Activated CD4-positive, alpha-beta T cell treated with anti-CD3 and anti-CD28 coated beads for 36 hours (primary cell): ENCODE measurements at regions of chr15 and their contacts with region 1.

Region 1: DNA sequence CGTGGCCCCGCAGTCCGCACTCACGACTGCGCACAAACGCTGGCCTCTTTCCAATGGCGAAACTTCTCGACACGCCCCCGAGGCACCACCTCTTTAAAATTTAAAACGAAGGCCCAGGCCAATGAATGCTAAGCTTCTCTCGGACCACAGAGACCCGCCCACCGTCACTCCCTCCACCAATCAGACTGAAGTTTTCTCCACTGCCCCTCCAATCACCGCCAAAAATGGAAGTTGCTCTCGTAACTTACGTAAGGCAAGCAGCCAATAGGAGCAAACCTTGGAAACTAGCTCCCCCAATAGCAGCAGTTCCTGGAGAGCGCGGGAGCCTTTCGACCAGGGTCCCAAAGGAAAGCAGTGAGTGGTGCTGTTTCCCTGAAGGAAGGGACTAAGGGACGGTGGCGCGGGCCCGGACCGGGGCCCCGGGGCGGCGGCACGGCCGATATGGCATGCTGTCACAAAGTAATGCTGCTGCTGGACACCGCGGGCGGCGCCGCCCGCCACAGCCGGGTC is at the start of gene TICRR:
- DNase-seq: peak; percentile 96
- ATAC-seq: peak; percentile 99
- H3K4me3 Mint-ChIP-seq: peak within 1 kb of the TSS; percentile 89
- H3K27ac Mint-ChIP-seq: peak within 1 kb of the TSS; percentile 72
- H3K4me1 Mint-ChIP-seq: peaks cover 26% of the 10 kb centered on the region
- H3K27me3 Mint-ChIP-seq: peaks cover 5% of the 10 kb centered on the region
- total RNA-seq, gene TICRR: 25.7 to 28.9 TPM

Region 2: DNA sequence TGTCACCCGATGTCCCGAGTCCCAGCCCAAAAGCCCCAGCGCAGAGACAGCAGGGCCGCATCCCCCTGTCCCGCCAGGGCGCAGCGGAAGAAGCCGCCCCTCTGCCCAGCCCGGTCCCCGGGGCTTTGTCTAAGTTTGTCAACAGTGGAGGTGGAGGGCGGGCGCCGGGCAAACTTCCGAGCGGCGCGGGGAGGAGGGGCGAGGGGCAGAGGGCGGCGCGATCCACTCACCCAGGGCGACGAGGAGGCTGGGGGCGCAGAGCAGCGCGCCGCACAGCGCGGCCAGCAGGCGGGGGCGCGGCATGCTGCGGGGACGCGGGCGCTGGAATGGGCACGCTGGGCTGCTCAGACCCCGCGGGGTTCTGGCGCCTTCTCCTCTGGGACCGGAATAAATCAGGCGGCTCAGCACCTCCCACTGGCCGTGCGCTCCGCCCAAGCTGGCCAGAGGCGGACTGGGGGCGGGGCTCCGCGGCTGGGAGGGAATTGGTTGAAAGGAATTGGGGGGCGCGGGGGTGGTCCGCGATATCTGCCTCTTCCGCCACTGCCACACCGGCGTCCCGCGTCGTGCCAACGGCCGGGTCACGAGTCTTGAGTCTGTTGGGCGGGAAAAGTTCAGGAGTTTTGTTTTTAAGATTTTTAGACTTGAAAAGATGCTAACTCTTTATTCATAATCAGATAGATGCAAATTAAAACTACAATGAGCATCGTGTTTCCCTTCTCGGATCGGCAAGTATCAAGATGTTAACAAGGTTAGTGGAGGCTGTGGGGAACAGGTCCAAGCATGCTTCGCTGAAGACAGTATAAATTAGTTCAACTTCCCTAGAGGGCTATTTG is 662.0 kb before region 1 on chr15 and contains the start of gene MFGE8:
- CTCF ChIA-PET with region 1: no interaction called
- POLR2A ChIA-PET with region 1: no interaction called
- intact Hi-C with region 1: loop called in 1 of 2 experiments (anchors 10 kb)
- DNase-seq: peak; percentile 83
- ATAC-seq: peak; percentile 95
- H3K4me3 Mint-ChIP-seq: peak within 1 kb of the TSS; percentile 79
- H3K27ac Mint-ChIP-seq: peak within 1 kb of the TSS; percentile 82
- H3K4me1 Mint-ChIP-seq: peaks cover 16% of the 10 kb centered on the region
- H3K27me3 Mint-ChIP-seq: no peaks in the 10 kb centered on the region
- total RNA-seq, gene MFGE8: 17.0 to 18.6 TPM

Region 3: GRCh38 chr15:89334510-89335288 is 240.5 kb before region 1 on chr15 and contains the start of gene POLG:
- CTCF ChIA-PET with region 1: interaction called, 4 read pairs
- POLR2A ChIA-PET with region 1: no interaction called
- intact Hi-C with region 1: loop called in 1 of 2 experiments (anchors 1 kb)
- DNase-seq: peak; percentile 99
- ATAC-seq: peak; percentile 92
- H3K4me3 Mint-ChIP-seq: peak within 1 kb of the TSS; percentile 80
- H3K27ac Mint-ChIP-seq: peak within 1 kb of the TSS; percentile 87
- H3K4me1 Mint-ChIP-seq: peaks cover 56% of the 10 kb centered on the region
- H3K27me3 Mint-ChIP-seq: peaks cover 2% of the 10 kb centered on the region
- total RNA-seq, gene POLG: 63.2 to 80.4 TPM

Region 4: DNA sequence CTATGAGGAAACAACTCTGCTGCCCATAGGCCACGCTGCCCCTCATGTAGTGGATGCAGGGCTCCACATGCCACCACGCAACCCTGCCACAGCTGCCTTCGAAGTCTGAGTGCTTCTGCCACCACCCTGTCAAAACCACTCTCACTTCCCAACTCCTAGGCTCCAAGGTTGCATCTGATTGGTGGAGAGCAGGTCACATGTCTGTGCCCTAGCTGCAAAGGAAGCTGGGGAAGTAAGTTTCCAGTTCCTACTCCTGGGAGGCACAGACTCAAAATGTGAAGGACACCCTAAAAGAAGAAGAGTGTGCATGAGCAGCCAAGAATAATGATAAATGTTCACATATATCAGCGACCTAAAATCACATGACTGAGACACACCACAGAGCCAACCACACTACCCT is 31.8 kb before region 1 on chr15:
- CTCF ChIA-PET with region 1: no interaction called
- POLR2A ChIA-PET with region 1: no interaction called
- intact Hi-C with region 1: no loop called
- DNase-seq: no peak
- ATAC-seq: no peak
- H3K4me3 Mint-ChIP-seq: no peak overlapping the region
- H3K27ac Mint-ChIP-seq: no peak overlapping the region
- H3K4me1 Mint-ChIP-seq: no peaks in the 10 kb centered on the region
- H3K27me3 Mint-ChIP-seq: peaks cover 21% of the 10 kb centered on the region

Region 5: GRCh38 chr15:89690276-89691218 is 115.3 kb after region 1 on chr15 and contains the starts of genes PEX11A and WDR93:
- CTCF ChIA-PET with region 1: no interaction called
- POLR2A ChIA-PET with region 1: no interaction called
- intact Hi-C with region 1: loop called (anchors 1 to 10 kb)
- DNase-seq: peak; percentile 87
- ATAC-seq: peak; percentile 92
- H3K4me3 Mint-ChIP-seq: peak within 1 kb of the TSS; percentile 85
- H3K27ac Mint-ChIP-seq: peak within 1 kb of the TSS; percentile 82
- H3K4me1 Mint-ChIP-seq: peaks cover 12% of the 10 kb centered on the region
- H3K27me3 Mint-ChIP-seq: no peaks in the 10 kb centered on the region
- total RNA-seq, gene PEX11A: 4.7 to 5.3 TPM
- total RNA-seq, gene WDR93: not detected